HCT116 (cell line): ENCODE measurements at regions of chr3 and their contacts with region 1.

Region 1: DNA sequence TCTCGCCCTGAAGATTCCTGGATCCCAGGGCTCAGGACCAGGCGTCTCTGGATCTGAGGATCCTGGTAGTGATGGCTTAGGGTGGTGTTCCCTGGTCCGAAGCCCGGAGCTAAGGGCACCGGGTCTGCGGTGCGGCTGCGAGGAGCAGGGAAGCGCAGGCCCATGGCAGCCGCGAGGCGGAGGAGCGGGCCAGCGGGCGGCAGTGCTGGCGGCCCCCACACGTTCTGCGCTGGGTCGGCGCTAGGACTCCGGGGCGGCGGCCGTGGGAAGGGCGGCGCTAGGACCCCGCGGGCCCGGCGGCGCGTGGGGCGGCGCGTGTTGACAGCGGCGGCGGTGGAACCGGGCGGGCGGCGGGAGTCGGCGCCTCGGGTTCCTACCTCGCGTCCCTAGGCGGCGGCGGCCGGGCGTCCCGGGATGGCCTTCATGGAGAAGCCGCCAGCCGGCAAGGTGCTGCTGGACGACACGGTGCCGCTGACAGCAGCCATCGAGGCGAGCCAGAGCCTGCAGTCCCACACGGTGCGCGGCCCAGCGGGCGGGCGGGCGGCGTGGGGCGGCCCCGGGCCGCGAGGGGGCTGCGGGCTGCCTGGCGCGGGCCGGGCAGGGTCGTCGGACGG is at the start of gene PXK:
- DNase-seq: peak; percentile 27
- ATAC-seq: peak; percentile 91
- H3K4me3 ChIP-seq: peak within 1 kb of the TSS; percentile 67 to 74
- H3K27ac ChIP-seq: peak within 1 kb of the TSS; percentile 33; the same call in 1 of the 2 replicates
- H3K4me1 ChIP-seq: peaks cover 14 to 33% of the 10 kb centered on the region in 2 experiments; a peak in 3 of 4 replicates
- H3K27me3 ChIP-seq: no peaks in the 10 kb centered on the region
- CTCF ChIP-seq: peak in 2 of 3 experiments; percentile 7 to 17; a peak in 1 of 6 replicates
- POLR2A ChIP-seq: no peak
- RAD21 ChIP-seq: 0 out of 2 replicates have a peak, but pooled peaks have one; percentile 3
- total RNA-seq, gene PXK: 10.2 TPM

Region 2: DNA sequence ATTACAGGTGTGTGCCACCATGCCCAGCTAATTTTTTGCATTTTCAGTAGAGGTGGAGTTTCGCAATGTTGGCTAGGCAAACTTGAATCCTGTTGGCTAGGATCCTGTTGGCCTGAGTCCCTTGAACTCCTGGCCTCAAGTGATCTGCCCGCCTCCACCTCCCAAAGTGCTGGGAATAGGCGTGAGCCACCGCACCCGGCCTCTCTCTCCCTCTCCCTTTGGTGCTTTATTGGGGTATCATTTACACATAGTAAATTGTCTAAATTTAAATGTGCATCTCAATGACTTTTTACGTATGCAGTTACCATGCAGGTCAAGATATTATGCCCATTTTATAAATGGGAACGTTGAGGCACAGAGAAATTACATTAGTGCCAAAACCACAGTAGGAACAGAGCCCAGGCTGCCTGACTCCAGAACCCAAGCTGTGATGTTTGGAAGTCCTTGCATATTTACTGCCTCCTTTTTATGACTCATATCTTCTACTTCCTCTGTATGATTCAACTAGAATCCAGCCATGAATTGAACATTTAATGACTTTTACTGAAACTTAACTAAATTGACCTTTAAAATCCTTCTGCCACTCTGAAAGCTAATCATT is 60.7 kb before region 1 on chr3:
- CTCF ChIA-PET with region 1: no interaction called
- POLR2A ChIA-PET with region 1: no interaction called
- RAD21 ChIA-PET with region 1: no interaction called
- intact Hi-C with region 1: no loop called
- DNase-seq: peak; percentile 73
- ATAC-seq: peak; percentile 95
- H3K4me3 ChIP-seq: peak overlapping the region in 1 of 2 experiments; percentile 34; a peak in 2 of 4 replicates
- H3K27ac ChIP-seq: peak overlapping the region; percentile 27; the same call in 1 of the 2 replicates
- H3K4me1 ChIP-seq: peaks cover 11 to 25% of the 10 kb centered on the region in 2 experiments
- H3K27me3 ChIP-seq: no peaks in the 10 kb centered on the region
- CTCF ChIP-seq: no peak
- POLR2A ChIP-seq: no peak
- RAD21 ChIP-seq: no peak

Region 3: DNA sequence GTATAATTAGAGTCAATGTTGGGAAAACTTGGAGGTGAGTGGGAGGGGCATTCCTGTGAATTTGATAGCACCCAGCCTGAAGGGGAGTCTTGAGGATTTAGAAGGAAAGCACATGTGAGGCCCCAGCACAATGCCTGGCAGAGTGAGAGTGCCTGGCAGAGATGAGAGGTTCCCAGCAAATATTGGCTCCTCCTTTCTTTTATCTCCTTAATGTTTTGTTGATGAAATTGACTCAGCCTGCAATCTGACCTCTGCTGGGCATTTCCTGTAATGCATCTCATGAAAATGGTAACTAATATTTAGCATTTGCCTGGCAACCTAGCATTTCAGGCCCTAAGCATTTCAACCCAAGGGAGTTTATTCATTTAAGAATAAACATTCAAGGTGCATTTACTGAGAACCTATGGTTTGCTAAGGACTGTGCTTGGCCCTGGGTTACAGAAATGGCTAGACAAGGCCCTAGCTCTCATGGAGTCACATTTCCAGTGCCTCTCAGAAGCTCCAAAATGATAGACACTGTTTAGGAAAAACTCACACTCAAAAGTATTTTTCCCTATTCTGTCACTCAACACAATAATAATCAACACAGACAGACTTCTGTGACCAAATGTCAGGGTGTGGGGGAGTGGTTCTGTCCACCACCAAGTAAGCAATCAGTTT is 82.0 kb after region 1 on chr3:
- CTCF ChIA-PET with region 1: interaction called, 4 read pairs
- POLR2A ChIA-PET with region 1: no interaction called
- RAD21 ChIA-PET with region 1: no interaction called
- intact Hi-C with region 1: loop called (anchors 1 kb)
- DNase-seq: peak; percentile 44
- ATAC-seq: peak; percentile 86
- H3K4me3 ChIP-seq: no peak overlapping the region
- H3K27ac ChIP-seq: no peak overlapping the region
- H3K4me1 ChIP-seq: peaks cover 2 to 3% of the 10 kb centered on the region in 2 experiments; a peak in 3 of 4 replicates
- H3K27me3 ChIP-seq: no peaks in the 10 kb centered on the region
- CTCF ChIP-seq: peak; percentile 66 to 87 (median 80)
- POLR2A ChIP-seq: no peak
- RAD21 ChIP-seq: peak; percentile 74

Region 4: DNA sequence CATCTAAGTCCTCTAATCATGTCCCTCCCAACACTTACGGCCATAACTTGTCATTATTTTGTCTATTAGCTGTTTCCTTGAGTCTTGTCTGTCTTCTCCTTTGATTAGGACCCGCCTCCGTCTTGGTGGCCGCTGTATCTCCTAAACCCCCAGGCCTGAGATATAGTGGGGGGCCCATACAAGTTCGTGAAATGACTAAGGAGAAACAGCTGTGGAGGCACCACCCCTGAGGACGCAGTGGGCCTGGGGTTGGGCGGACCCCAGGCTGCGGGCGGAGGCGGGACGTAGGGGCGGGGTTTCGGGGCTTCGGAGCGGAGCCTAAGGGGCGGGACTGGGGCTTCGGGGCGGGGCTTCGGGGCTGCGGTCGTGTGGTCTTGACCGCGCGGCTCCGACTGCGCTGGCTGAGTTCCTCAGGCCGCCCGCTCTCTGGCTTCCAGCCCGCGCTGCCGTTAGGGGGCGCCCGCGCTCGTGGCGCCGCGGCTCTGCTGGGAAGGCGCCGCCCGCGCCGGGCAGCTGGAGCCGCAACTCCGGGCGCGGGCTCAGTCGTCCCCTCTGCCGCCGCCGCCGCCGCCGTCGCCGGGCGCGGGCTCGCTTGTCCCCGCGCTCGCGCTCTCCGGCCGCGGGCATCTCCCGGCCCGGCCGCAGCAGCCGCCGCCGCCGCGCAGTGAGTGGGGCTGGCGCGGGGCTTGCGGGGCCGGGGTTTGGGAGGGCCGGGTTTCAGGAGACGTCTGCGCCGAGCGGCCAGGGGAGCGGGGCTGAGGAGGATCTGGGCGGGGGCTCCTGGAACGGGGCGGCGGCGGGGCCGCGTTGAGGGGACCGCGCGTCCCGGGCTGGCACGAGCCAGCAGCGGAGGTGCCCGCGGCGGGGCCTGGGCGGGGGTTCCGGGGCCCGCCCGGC is 159.1 kb after region 1 on chr3 and contains the start of gene KCTD6:
- CTCF ChIA-PET with region 1: interaction called, 6 read pairs
- POLR2A ChIA-PET with region 1: no interaction called
- RAD21 ChIA-PET with region 1: no interaction called
- intact Hi-C with region 1: loop called (anchors 2 kb)
- DNase-seq: peak; percentile 85
- ATAC-seq: peak; percentile 94
- H3K4me3 ChIP-seq: peak within 1 kb of the TSS; percentile 77 to 85
- H3K27ac ChIP-seq: peak within 1 kb of the TSS; percentile 65
- H3K4me1 ChIP-seq: peaks cover 19 to 38% of the 10 kb centered on the region in 2 experiments
- H3K27me3 ChIP-seq: no peaks in the 10 kb centered on the region
- CTCF ChIP-seq: peak; percentile 47 to 68 (median 66); a peak in 5 of 6 replicates
- POLR2A ChIP-seq: peak; percentile 37
- RAD21 ChIP-seq: peak; percentile 69
- total RNA-seq, gene KCTD6: 12.0 TPM